BJ (cell line): ENCODE measurements at regions of chr11 and their contacts with region 1.

Region 1: GRCh38 chr11:76807206-76807875 is 24.2 kb downstream of the TSKU start:
- DNase-seq: no peak
- H3K4me3 ChIP-seq: no peak overlapping the region
- H3K27me3 ChIP-seq: no peaks in the 10 kb centered on the region
- CTCF ChIP-seq: peak; percentile 80

Region 2: GRCh38 chr11:76721755-76722677 is 85.3 kb before region 1 on chr11:
- CTCF ChIA-PET with region 1: interaction called, 47 read pairs
- POLR2A ChIA-PET with region 1: no interaction called
- DNase-seq: no peak
- H3K4me3 ChIP-seq: no peak overlapping the region
- H3K27me3 ChIP-seq: peaks cover 13% of the 10 kb centered on the region
- CTCF ChIP-seq: peak; percentile 97

Region 3: GRCh38 chr11:76734456-76735420 is 72.6 kb before region 1 on chr11:
- CTCF ChIA-PET with region 1: interaction called, 179 read pairs
- POLR2A ChIA-PET with region 1: no interaction called
- DNase-seq: no peak
- H3K4me3 ChIP-seq: no peak overlapping the region
- H3K27me3 ChIP-seq: peaks cover 7% of the 10 kb centered on the region
- CTCF ChIP-seq: no peak

Region 4: DNA sequence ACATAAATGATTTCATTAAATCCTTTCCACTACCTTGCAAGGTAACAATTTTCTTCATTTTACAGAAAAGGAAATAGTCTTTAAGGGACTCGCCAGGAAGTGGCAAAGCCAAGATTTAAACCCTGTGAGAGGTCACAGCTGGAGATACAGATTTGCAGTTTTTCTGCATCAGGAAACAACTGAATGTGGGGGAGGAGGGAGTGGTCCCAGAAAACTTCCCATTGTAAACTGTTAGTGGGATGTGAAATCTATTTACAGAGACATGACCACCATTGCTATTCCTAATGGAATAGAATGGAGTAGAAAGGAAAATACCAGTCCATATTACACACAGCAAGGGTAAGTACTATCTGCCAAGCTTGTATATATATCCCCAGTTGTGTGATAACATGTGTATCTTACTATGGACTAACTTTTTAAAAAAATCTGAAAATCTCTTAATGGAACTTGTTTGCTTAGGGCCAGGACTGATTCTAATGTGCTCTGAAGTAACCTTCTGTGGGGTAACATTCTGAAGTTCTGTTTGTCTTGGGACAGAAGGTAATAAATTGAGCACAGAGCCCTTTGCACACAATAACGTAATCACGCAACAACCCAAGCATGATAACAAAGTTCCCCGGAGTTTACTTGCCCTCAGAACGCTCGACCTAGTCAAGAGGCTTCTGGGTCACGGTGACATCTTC is 35.1 kb before region 1 on chr11:
- CTCF ChIA-PET with region 1: no interaction called
- POLR2A ChIA-PET with region 1: no interaction called
- DNase-seq: no peak
- H3K4me3 ChIP-seq: no peak overlapping the region
- H3K27me3 ChIP-seq: peaks cover 1% of the 10 kb centered on the region
- CTCF ChIP-seq: no peak

Region 5: DNA sequence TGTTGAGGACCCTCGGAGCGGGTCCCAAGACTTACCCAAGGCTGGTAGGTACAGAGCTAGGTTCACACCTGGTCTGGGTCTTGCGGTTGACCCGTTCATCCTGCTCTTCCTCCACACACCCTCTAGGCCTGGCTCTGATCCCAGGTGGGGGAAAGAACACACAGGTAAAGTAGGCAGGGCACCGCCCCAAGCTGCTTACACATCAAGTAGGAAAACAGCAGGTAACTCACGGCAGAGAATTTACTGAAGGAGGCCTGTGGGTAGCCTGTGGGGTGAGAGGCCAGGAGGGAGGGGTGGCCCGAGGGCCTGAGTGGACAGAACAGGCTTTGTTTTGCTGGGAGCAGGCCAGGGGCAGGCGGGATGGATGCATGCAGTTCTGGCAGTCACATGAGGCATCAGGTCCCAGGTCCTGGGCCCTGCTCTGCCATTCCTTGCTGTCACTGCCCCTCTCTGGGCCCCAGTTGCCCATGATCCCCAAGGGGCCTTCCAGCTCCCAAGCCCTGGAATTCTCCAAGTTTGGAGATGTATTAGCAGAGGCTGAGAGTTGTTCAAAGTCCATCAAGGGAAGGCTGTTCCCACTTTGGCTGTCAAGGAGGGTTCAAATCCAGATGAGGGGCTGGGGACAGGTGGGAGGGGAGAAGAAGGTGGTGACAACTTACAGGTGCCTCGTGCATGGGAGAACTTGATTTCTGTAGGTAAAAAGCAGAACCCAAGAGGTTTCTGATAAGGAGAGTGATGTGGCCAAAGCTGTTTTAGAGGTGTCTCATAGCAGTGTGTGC is 18.5 kb before region 1 on chr11:
- CTCF ChIA-PET with region 1: interaction called, 12 read pairs
- POLR2A ChIA-PET with region 1: no interaction called
- DNase-seq: no peak
- H3K4me3 ChIP-seq: no peak overlapping the region
- H3K27me3 ChIP-seq: no peaks in the 10 kb centered on the region
- CTCF ChIP-seq: no peak

Region 6: GRCh38 chr11:76820184-76820566 is 12.8 kb after region 1 on chr11:
- CTCF ChIA-PET with region 1: interaction called, 17 read pairs
- POLR2A ChIA-PET with region 1: no interaction called
- DNase-seq: no peak
- H3K4me3 ChIP-seq: no peak overlapping the region
- H3K27me3 ChIP-seq: no peaks in the 10 kb centered on the region
- CTCF ChIP-seq: no peak